Prostate gland (tissue), 2 donors: ENCODE measurements at regions of chr22 and their contacts with region 1.

Region 1: GRCh38 chr22:50274311-50274710 is 4.1 kb upstream of the MAPK11 start:
- DNase-seq: peak; percentile 57
- H3K4me3 ChIP-seq: no peak overlapping the region
- H3K27ac ChIP-seq: no peak overlapping the region
- H3K4me1 ChIP-seq: peaks cover 12% of the 10 kb centered on the region
- H3K27me3 ChIP-seq: no peaks in the 10 kb centered on the region
- CTCF ChIP-seq: peak in 1 of 4 experiments; percentile 16
- POLR2A ChIP-seq: no peak

Region 2: GRCh38 chr22:49992921-49993648 is 281.2 kb before region 1 on chr22:
- intact Hi-C with region 1: no loop called
- DNase-seq: peak; percentile 62
- H3K4me3 ChIP-seq: no peak overlapping the region
- H3K27ac ChIP-seq: no peak overlapping the region
- H3K4me1 ChIP-seq: no peaks in the 10 kb centered on the region
- H3K27me3 ChIP-seq: no peaks in the 10 kb centered on the region
- CTCF ChIP-seq: peak; percentile 45 to 90 (median 78)
- POLR2A ChIP-seq: no peak

Region 3: GRCh38 chr22:50326959-50327710 is 52.8 kb after region 1 on chr22 and contains the start of gene DENND6B:
- intact Hi-C with region 1: loop called (anchors 1 kb)
- DNase-seq: peak; percentile 76
- H3K4me3 ChIP-seq: peak within 1 kb of the TSS; percentile 83 to 85
- H3K27ac ChIP-seq: peak within 1 kb of the TSS; percentile 89 to 93
- H3K4me1 ChIP-seq: no peaks in the 10 kb centered on the region
- H3K27me3 ChIP-seq: no peaks in the 10 kb centered on the region
- CTCF ChIP-seq: peak; percentile 27 to 94 (median 70)
- POLR2A ChIP-seq: peak; percentile 28
- total RNA-seq, gene DENND6B: 9.6 to 19.6 TPM

Region 4: GRCh38 chr22:50341977-50342650 is 67.8 kb after region 1 on chr22:
- intact Hi-C with region 1: loop called (anchors 2 kb)
- DNase-seq: peak; percentile 85
- H3K4me3 ChIP-seq: peak overlapping the region; percentile 92 to 99
- H3K27ac ChIP-seq: peak overlapping the region; percentile 76 to 82
- H3K4me1 ChIP-seq: no peaks in the 10 kb centered on the region
- H3K27me3 ChIP-seq: no peaks in the 10 kb centered on the region
- CTCF ChIP-seq: peak; percentile 90 to 97 (median 94)
- POLR2A ChIP-seq: no peak